Calu3 (cell line): ENCODE measurements at regions of chr2 and their contacts with region 1.

Region 1: DNA sequence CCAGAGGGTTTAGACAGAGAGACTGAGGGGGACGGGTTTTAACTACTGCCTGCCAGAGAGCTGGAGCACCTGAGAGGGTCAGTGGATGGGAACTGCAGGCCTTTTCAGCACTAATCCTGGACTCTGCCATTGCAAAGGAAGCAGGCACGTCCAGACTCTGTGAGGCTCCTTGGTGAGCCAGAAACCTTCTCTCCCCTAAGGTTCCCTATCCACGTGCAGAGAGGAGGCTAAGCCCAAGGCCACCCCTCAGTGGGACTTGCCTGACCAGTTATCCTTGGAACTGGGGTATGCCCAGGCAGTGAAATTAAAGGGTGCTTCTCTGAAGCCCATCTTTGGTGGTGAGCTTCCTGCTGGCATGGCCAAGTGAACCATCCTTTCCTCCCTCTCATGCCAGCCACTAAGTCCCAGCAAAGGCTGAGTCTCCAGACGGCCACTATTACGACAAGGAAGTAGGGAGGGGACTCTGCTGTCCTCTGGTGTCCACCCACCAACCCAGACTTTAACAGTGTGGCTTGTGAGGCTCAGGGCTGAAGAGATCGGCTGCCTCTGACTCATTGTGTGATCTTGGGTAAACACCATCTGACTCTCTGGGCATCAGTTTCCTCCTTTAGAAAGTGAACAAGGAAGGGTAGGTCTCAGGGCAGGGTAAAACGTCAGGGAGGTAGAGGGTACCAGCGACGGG is 3.9 kb upstream of the MLPH start:
- DNase-seq: peak; percentile 82
- H3K4me3 Mint-ChIP-seq: peak overlapping the region; percentile 20
- H3K27ac Mint-ChIP-seq: peak overlapping the region; percentile 89
- H3K4me1 Mint-ChIP-seq: peaks cover 33% of the 10 kb centered on the region
- H3K27me3 Mint-ChIP-seq: peaks cover 41% of the 10 kb centered on the region
- CTCF ChIP-seq: peak; percentile 20

Region 2: DNA sequence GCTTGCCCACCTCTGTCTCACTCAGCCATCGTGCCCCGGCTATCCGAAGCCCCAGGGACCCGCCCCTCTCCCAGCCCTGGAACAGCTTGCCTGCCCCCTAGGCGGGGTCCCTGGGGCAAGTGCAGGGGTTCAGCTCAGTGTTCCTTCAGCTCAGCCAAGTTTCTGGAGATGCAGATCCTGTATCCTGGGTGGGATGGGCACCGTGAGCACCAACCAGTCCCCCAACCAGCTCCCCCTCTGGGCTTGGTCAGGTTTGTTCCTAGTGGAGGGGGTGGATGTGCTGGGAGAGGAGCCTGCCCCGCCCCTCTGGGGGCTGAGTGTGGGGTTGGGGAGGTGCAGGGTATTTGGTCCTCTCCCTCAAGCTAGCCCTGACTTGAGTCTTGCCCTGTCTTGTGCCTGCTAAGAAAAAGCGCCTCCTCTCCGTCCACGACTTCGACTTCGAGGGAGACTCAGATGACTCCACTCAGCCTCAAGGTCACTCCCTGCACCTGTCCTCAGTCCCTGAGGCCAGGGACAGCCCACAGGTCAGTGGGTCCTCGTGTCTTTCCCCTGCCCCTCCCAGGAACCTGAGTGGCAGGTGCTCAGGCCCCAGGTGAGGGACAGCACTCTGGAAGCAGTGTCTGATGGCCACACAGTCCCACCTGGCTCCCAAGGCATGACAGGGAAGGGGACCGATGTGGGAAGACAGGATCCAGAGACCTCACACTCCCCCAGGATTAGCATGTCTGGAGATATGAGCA is 36.5 kb after region 1 on chr2:
- CTCF ChIA-PET with region 1: no interaction called
- intact Hi-C with region 1: loop called (anchors 2 kb)
- DNase-seq: no peak
- H3K4me3 Mint-ChIP-seq: no peak overlapping the region
- H3K27ac Mint-ChIP-seq: no peak overlapping the region
- H3K4me1 Mint-ChIP-seq: no peaks in the 10 kb centered on the region
- H3K27me3 Mint-ChIP-seq: no peaks in the 10 kb centered on the region
- CTCF ChIP-seq: no peak